HepG2 (cell line): ENCODE measurements at regions of chr11 and their contacts with region 1.

Region 1: DNA sequence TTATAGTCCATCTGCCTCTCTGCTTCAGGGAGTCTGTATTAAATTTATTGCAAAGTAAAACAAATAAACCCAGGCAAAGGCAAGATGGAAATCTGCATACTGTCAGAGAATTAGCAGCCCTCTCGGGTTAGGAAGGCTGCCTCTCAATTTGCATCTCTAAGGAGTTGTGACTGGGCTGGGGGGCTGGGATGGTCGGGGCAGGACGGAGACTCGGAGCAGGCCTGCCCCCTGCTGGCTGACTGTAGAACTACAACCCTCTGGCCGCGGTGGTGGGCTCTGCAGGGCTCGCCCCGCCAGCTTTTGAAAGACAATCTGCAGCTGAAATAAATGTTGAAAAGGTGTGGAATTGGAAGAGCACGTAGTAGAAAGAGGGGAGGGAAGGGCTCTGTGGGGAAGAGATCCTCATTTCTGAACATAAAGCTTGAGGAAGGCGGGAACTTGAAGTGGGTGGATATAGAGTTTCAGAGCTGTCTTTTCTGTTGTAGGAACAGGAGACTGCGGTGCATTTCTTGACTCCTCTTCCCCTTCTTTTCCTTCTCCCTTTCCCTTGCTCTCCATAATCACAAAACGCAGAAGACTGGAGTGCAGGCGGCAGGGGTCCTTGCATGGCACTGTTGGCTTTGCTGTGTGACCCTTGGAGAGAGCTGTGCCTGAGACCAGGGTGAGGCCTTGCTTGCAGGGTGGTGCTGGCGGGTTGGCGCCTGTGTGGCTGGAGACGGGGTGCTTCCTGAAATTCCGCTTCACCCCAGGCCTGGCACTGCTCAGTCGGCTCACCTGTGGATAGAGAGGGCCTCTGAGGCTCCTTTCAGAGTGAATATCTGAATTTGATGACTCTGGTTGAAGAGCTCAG is 22.6 kb upstream of the PKNOX2 start:
- DNase-seq: no peak
- ATAC-seq: peak; percentile 89
- H3K4me3 ChIP-seq: no peak overlapping the region
- H3K27ac ChIP-seq: no peak overlapping the region
- H3K4me1 ChIP-seq: peaks cover 5% of the 10 kb centered on the region; the same call in 1 of the 2 replicates
- H3K27me3 ChIP-seq: peaks cover 4 to 49% of the 10 kb centered on the region in 2 experiments
- CTCF ChIP-seq: peak; percentile 85
- EP300 ChIP-seq: no peak
- POLR2A ChIP-seq: no peak
- RAD21 ChIP-seq: peak; percentile 55; the same call in 1 of the 2 replicates

Region 2: GRCh38 chr11:124961972-124962609 is 179.8 kb before region 1 on chr11:
- CTCF ChIA-PET with region 1: interaction called, 23 read pairs
- POLR2A ChIA-PET with region 1: no interaction called
- in situ Hi-C with region 1: no loop called
- intact Hi-C with region 1: loop called (anchors 2 kb)
- DNase-seq: peak; percentile 78
- ATAC-seq: peak; percentile 93
- H3K4me3 ChIP-seq: no peak overlapping the region
- H3K27ac ChIP-seq: no peak overlapping the region
- H3K4me1 ChIP-seq: no peaks in the 10 kb centered on the region
- H3K27me3 ChIP-seq: no peaks in the 10 kb centered on the region
- CTCF ChIP-seq: peak; percentile 87
- EP300 ChIP-seq: no peak
- POLR2A ChIP-seq: no peak
- RAD21 ChIP-seq: peak; percentile 67

Region 3: GRCh38 chr11:124970925-124971324 is 171.0 kb before region 1 on chr11:
- CTCF ChIA-PET with region 1: interaction called, 3 read pairs
- POLR2A ChIA-PET with region 1: no interaction called
- in situ Hi-C with region 1: loop called (anchors 10 kb)
- intact Hi-C with region 1: loop called (anchors 2 kb)
- DNase-seq: peak; percentile 27
- ATAC-seq: peak; percentile 86
- H3K4me3 ChIP-seq: no peak overlapping the region
- H3K27ac ChIP-seq: no peak overlapping the region
- H3K4me1 ChIP-seq: no peaks in the 10 kb centered on the region
- H3K27me3 ChIP-seq: no peaks in the 10 kb centered on the region
- CTCF ChIP-seq: peak; percentile 55
- EP300 ChIP-seq: no peak
- POLR2A ChIP-seq: no peak
- RAD21 ChIP-seq: no peak

Region 4: GRCh38 chr11:125053167-125053566 is 88.7 kb before region 1 on chr11:
- CTCF ChIA-PET with region 1: no interaction called
- POLR2A ChIA-PET with region 1: no interaction called
- in situ Hi-C with region 1: no loop called
- intact Hi-C with region 1: no loop called
- DNase-seq: no peak
- ATAC-seq: no peak
- H3K4me3 ChIP-seq: no peak overlapping the region
- H3K27ac ChIP-seq: no peak overlapping the region
- H3K4me1 ChIP-seq: peaks cover 16% of the 10 kb centered on the region
- H3K27me3 ChIP-seq: no peaks in the 10 kb centered on the region
- CTCF ChIP-seq: no peak
- EP300 ChIP-seq: no peak
- POLR2A ChIP-seq: no peak
- RAD21 ChIP-seq: no peak

Region 5: DNA sequence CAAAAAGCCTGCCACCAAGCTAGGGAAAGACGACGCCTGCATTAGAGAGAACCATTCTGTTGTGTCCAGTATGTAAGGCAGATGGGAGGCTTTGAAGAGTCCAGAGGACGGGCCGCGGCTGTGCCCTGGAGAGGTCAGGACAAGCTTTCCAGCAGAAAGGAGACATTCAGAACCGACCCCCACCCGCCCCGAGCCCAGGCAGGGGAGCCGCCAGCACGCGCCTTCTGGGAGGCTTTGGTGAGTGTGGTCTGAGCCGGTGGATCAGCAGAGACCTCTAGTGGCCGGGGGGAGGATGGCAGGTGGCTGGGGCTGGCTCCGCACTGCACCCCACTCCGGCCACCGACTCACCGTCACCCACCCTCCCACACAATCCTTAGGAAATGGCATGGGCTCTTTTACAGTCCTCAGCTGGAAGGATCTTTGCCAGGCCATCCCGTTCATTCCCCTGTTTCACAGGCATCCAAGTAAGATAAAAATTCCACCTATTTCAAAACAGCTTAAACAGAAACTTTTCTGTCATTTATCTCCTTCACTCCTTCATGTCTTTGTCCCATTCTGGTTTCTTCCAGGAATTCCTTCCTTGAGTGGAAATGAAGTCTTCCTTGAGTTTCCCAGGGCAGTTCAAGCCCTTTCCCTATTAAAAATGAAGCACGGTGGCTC is 263.0 kb after region 1 on chr11:
- CTCF ChIA-PET with region 1: no interaction called
- POLR2A ChIA-PET with region 1: no interaction called
- in situ Hi-C with region 1: no loop called
- intact Hi-C with region 1: no loop called
- DNase-seq: peak; percentile 11
- ATAC-seq: peak; percentile 97
- H3K4me3 ChIP-seq: no peak overlapping the region
- H3K27ac ChIP-seq: no peak overlapping the region
- H3K4me1 ChIP-seq: no peaks in the 10 kb centered on the region
- H3K27me3 ChIP-seq: peaks cover 13 to 96% of the 10 kb centered on the region in 2 experiments
- CTCF ChIP-seq: peak; percentile 91
- EP300 ChIP-seq: no peak
- POLR2A ChIP-seq: no peak
- RAD21 ChIP-seq: peak; percentile 49; the same call in 1 of the 2 replicates